HCT116 (cell line): ENCODE measurements at regions of chr5 and their contacts with region 1.

Region 1: GRCh38 chr5:95730730-95731570 is at the start of gene RHOBTB3:
- DNase-seq: peak; percentile 63
- ATAC-seq: peak; percentile 76
- H3K4me3 ChIP-seq: peak within 1 kb of the TSS; percentile 80 to 84
- H3K27ac ChIP-seq: peak within 1 kb of the TSS; percentile 85
- H3K4me1 ChIP-seq: peaks cover 48 to 57% of the 10 kb centered on the region in 2 experiments
- H3K27me3 ChIP-seq: no peaks in the 10 kb centered on the region
- CTCF ChIP-seq: no peak
- POLR2A ChIP-seq: peak; percentile 60
- RAD21 ChIP-seq: 0 out of 2 replicates have a peak, but pooled peaks have one; percentile 13
- total RNA-seq, gene RHOBTB3: 84.3 TPM

Region 2: DNA sequence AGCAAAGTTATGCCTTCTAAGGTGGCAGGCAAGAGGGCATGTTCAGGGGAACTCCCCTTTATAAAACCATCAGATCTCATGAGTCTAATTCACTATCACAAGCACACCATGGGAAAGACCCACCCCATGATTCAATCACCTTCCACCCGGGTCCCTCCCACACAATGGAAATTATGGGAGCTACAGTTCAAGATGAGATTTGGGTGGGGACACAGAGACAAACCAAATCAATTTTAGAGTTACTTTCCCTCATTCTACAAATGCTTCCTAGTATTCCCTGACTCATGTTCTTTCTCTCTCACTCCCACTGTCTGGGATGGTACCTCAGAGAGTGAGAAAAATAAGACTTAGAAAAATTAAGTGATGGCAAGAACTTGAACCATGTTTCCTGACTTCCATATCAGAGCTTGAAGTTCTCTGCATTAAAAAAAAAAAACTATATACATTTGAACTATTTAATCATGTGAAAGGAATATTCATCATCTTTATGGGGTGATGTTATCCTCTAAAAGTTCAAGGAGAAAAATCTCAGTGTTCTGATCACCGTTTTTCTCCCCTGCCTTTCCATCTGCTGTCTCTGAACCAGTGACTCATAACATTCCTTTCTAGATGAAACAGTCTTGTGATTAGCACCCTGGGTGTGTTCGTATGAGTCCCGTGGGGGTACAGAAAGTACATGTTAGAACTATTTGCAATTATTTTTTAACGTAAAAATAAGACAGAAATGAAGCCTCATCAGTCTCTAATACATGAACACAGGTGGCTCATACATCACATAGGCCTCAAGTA is 829.6 kb before region 1 on chr5:
- CTCF ChIA-PET with region 1: no interaction called
- POLR2A ChIA-PET with region 1: no interaction called
- RAD21 ChIA-PET with region 1: no interaction called
- intact Hi-C with region 1: no loop called
- DNase-seq: no peak
- ATAC-seq: peak; percentile 63; the same call in 1 of the 2 replicates
- H3K4me3 ChIP-seq: no peak overlapping the region
- H3K27ac ChIP-seq: no peak overlapping the region
- H3K4me1 ChIP-seq: peaks cover 2 to 11% of the 10 kb centered on the region in 2 experiments; a peak in 3 of 4 replicates
- H3K27me3 ChIP-seq: no peaks in the 10 kb centered on the region
- CTCF ChIP-seq: no peak
- POLR2A ChIP-seq: no peak
- RAD21 ChIP-seq: no peak

Region 3: DNA sequence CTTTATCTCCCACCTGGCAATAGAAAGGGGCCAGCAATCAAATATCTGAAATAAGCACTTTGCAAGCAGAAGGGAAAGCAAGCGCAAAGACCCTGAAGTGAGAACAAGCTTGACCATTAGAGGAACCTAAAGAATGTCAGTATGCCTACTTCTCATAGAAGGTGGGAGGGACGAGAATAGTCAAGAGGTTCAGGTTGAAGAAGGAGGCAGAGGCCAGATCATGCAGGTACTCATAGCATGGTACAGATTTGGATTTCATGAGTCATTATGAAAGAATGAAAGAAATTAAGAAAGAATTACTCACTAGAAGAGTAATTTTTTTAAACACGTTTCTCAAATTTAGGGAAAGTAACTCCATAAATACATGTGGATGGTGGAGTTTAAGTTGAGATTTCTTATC is 479.8 kb before region 1 on chr5:
- CTCF ChIA-PET with region 1: no interaction called
- POLR2A ChIA-PET with region 1: no interaction called
- RAD21 ChIA-PET with region 1: no interaction called
- intact Hi-C with region 1: no loop called
- DNase-seq: no peak
- ATAC-seq: no peak
- H3K4me3 ChIP-seq: no peak overlapping the region
- H3K27ac ChIP-seq: no peak overlapping the region
- H3K4me1 ChIP-seq: no peaks in the 10 kb centered on the region
- H3K27me3 ChIP-seq: no peaks in the 10 kb centered on the region
- CTCF ChIP-seq: no peak
- POLR2A ChIP-seq: no peak
- RAD21 ChIP-seq: no peak

Region 4: GRCh38 chr5:95715799-95716461 is 15.0 kb before region 1 on chr5:
- CTCF ChIA-PET with region 1: no interaction called
- POLR2A ChIA-PET with region 1: no interaction called
- RAD21 ChIA-PET with region 1: interaction called in 1 of 2 experiments, 3 read pairs
- intact Hi-C with region 1: loop called (anchors 2 kb)
- DNase-seq: peak; percentile 63
- ATAC-seq: no peak
- H3K4me3 ChIP-seq: 0 out of 4 replicates have a peak overlapping the region, but pooled peaks of 1 of the 2 experiments have one; percentile 1
- H3K27ac ChIP-seq: peak overlapping the region; percentile 7; the same call in 1 of the 2 replicates
- H3K4me1 ChIP-seq: peaks cover 46 to 72% of the 10 kb centered on the region in 2 experiments
- H3K27me3 ChIP-seq: no peaks in the 10 kb centered on the region
- CTCF ChIP-seq: no peak
- POLR2A ChIP-seq: no peak
- RAD21 ChIP-seq: no peak

Region 5: DNA sequence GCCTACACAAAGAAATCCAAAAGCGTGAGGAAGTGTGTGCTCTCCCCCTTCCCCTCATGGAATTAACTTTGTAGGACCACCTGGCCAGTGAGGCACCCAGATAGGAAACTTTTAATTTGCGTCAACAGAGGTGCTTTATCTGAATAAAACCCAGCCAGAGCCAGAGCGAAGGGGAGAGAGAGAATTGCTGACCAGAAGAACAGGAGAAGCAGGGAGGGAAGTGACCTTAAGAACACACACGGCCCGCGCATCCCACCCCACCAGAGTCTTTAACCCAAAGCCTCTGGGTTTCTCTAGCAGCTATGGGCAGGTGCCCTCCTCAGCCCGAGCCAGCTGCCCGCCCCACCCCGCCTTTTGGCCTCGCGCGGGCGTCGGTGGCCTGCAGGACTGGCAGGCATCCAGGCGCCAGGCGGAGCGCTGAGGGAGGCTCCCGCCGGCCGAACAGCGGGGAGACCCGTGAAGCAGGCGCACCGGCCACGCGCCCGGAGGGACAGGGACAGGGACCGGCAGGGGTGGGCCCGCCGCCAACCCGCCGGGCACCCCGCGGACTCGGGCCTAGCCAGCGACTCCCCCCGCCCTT is 1076.2 kb after region 1 on chr5:
- CTCF ChIA-PET with region 1: no interaction called
- POLR2A ChIA-PET with region 1: no interaction called
- RAD21 ChIA-PET with region 1: no interaction called
- intact Hi-C with region 1: loop called (anchors 10 kb)
- DNase-seq: no peak
- ATAC-seq: peak; percentile 60
- H3K4me3 ChIP-seq: peak overlapping the region; percentile 68 to 73
- H3K27ac ChIP-seq: peak overlapping the region; percentile 94
- H3K4me1 ChIP-seq: peaks cover 5 to 13% of the 10 kb centered on the region in 2 experiments; a peak in 3 of 4 replicates
- H3K27me3 ChIP-seq: no peaks in the 10 kb centered on the region
- CTCF ChIP-seq: no peak
- POLR2A ChIP-seq: no peak
- RAD21 ChIP-seq: no peak